ENCODE measurements at regions of chr7 and their contacts with region 1.

Region 1: DNA sequence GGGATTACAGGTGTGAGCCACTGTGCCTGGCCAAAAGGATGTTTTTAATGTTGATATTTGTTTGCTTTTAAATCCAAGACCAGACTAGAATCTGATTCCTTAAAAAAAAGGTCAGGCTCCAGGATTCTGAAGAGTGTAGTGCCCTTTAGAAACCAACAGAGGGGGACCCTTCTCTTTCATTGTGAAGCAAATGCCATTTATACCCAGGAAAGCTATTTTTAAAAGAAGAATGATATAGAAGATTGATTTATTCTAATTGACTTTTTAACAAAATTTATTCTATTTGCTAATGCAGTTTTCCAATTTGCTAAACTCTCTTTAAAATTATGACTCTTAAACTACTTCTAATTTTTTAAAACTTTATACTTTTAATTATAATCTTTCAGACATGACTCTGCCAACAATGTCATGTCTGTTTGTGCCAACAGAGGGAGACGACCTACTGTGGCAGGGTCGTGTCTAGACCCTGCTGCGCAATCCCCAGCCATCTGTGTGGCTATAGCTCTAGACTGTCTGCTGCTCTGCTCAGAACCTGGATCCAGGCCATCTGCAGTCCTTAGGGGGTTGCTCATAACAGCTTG is 201.0 kb upstream of the IMMP2L start:
- ATAC-seq: peak; percentile 68 to 93 (median 78)
- H3K4me3 ChIP-seq: no peak overlapping the region
- H3K27ac ChIP-seq: no peak overlapping the region
- H3K4me1 ChIP-seq: no peaks in the 10 kb centered on the region

Region 2: GRCh38 chr7:111266613-111267012 is 496.7 kb before region 1 on chr7:
- in situ Hi-C with region 1: no loop called
- ATAC-seq: peak in 3 of 8 experiments; percentile 17 to 33 (median 17)
- H3K4me3 ChIP-seq: no peak overlapping the region
- H3K27ac ChIP-seq: no peak overlapping the region
- H3K4me1 ChIP-seq: peaks cover 0 to 7% of the 10 kb centered on the region in 2 donors

Region 3: GRCh38 chr7:111678281-111678680 is 85.0 kb before region 1 on chr7:
- in situ Hi-C with region 1: no loop called
- ATAC-seq: no peak
- H3K4me3 ChIP-seq: no peak overlapping the region
- H3K27ac ChIP-seq: no peak overlapping the region
- H3K4me1 ChIP-seq: peaks cover 4 to 7% of the 10 kb centered on the region in 2 donors

Region 4: GRCh38 chr7:111855161-111855856 is 92.0 kb after region 1 on chr7:
- in situ Hi-C with region 1: loop called in 3 of 9 experiments (anchors 10 to 25 kb)
- ATAC-seq: peak in 6 of 8 experiments; percentile 55 to 97 (median 91)
- H3K4me3 ChIP-seq: no peak overlapping the region
- H3K27ac ChIP-seq: no peak overlapping the region
- H3K4me1 ChIP-seq: peaks cover 0 to 2% of the 10 kb centered on the region in 2 donors

Region 5: DNA sequence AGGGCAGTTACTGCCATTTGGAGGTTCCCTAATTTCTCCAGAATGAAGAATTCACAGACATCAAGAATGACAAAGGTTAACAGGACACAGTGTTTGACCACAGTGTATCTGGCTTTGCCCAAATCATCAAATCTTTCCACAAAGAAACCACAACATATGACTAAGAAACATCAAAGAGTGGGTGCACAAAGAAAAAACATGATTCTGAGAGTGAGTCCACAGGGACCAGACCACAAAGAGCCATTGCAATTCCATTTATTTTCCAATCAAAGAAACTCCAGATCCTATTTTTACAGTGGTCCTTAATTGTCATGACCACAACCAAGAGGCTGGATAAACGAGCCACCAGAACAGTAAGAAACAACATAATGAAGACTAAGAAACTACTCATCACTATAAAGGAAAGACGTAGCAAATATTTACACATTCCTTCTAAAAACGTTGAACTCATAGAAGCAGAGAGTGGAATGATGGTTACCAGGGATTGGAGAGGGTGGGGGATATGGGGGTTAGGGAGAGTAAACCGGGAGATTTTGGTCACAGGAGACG is 156.4 kb after region 1 on chr7:
- in situ Hi-C with region 1: no loop called
- ATAC-seq: peak in 1 of 8 experiments; percentile 93
- H3K4me3 ChIP-seq: no peak overlapping the region
- H3K27ac ChIP-seq: no peak overlapping the region
- H3K4me1 ChIP-seq: no peaks in the 10 kb centered on the region

Measured in motor neuron (in vitro differentiated cells).